ENCODE measurements at regions of chr2 and their contacts with region 1.

Region 1: GRCh38 chr2:97806738-97807618 is 93.6 kb downstream of the ZAP70 start:
- DNase-seq: peak; percentile 86 to 94 (median 92)
- ATAC-seq: peak; percentile 95 to 98
- H3K4me3 ChIP-seq: no peak overlapping the region
- H3K27ac ChIP-seq: no peak overlapping the region
- H3K4me1 ChIP-seq: no peaks in the 10 kb centered on the region
- H3K27me3 ChIP-seq: no peaks in the 10 kb centered on the region

Region 2: GRCh38 chr2:97740590-97741182 is 66.3 kb before region 1 on chr2:
- intact Hi-C with region 1: no loop called
- DNase-seq: peak in 2 of 3 donors; percentile 27 to 61
- ATAC-seq: peak in 1 of 2 donors; percentile 27
- H3K4me3 ChIP-seq: no peak overlapping the region
- H3K27ac ChIP-seq: no peak overlapping the region
- H3K4me1 ChIP-seq: peaks cover 6% of the 10 kb centered on the region
- H3K27me3 ChIP-seq: no peaks in the 10 kb centered on the region

Region 3: DNA sequence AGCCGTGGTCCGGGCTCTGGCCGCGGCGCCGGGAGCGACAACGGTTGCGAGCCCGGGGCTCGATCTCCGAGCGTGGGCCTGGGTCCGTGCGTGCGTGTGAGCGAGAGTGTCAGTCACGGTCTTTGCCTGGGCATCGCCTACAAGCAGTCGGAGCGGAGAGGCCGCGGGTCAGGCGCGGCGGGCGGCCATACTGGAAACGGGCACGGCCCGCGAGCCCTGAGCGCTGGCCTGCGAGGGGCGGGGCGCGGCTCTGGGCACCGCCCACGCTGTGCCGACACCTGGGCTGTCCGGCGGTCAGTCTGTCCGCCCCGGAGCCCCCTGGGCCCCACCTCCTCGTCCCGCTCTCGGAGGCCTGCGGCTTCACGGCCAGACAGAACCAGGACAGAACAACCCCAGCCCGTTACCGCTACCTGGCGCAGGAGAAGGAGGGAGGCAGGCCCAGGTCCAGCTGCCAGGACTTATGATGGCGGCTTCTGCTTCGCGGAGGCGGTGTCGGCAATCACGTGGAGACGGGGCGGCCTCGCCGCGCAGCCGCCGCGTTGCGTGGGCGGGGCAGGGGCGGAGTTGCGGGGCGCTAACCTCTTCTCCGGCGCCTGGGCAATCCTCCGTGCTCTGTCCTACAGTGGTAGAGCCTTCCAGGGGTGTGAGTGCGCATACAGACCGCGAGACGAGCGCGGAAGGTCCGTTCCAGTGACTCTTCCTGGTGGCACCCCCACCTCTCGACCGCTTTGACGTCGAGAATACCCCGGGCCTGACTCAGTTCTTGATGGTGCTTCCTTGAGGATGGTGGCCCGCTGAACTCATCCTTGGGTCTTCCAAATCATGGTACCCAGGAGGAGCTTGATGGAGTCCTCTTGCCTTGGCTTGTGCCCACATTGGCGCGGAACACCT is 189.0 kb after region 1 on chr2 and contains the start of gene TMEM131:
- intact Hi-C with region 1: loop called in 2 of 4 experiments (anchors 10 kb)
- DNase-seq: peak; percentile 96 to 98 (median 98)
- ATAC-seq: peak; percentile 98
- H3K4me3 ChIP-seq: peak within 1 kb of the TSS; percentile 85
- H3K27ac ChIP-seq: peak within 1 kb of the TSS; percentile 82
- H3K4me1 ChIP-seq: no peaks in the 10 kb centered on the region
- H3K27me3 ChIP-seq: no peaks in the 10 kb centered on the region
- total RNA-seq, gene TMEM131: 26.4 to 32.7 (median 30.2) TPM

Region 4: GRCh38 chr2:98188351-98189049 is 381.5 kb after region 1 on chr2:
- intact Hi-C with region 1: loop called in 1 of 4 experiments (anchors 10 kb)
- DNase-seq: no peak
- ATAC-seq: no peak
- H3K4me3 ChIP-seq: no peak overlapping the region
- H3K27ac ChIP-seq: no peak overlapping the region
- H3K4me1 ChIP-seq: peaks cover 2% of the 10 kb centered on the region
- H3K27me3 ChIP-seq: no peaks in the 10 kb centered on the region

Region 5: GRCh38 chr2:98379672-98380535 is 572.9 kb after region 1 on chr2:
- intact Hi-C with region 1: loop called (anchors 2 to 5 kb)
- DNase-seq: no peak
- ATAC-seq: no peak
- H3K4me3 ChIP-seq: no peak overlapping the region
- H3K27ac ChIP-seq: no peak overlapping the region
- H3K4me1 ChIP-seq: no peaks in the 10 kb centered on the region
- H3K27me3 ChIP-seq: no peaks in the 10 kb centered on the region

Region 6: GRCh38 chr2:98385050-98385699 is 578.2 kb after region 1 on chr2:
- intact Hi-C with region 1: loop called (anchors 2 to 5 kb)
- DNase-seq: peak; percentile 76 to 87 (median 85)
- ATAC-seq: peak; percentile 80 to 85
- H3K4me3 ChIP-seq: no peak overlapping the region
- H3K27ac ChIP-seq: no peak overlapping the region
- H3K4me1 ChIP-seq: no peaks in the 10 kb centered on the region
- H3K27me3 ChIP-seq: no peaks in the 10 kb centered on the region

Measured in right cardiac atrium (tissue), 5 donors.